ENCODE measurements at regions of chrX and their contacts with region 1.

Region 1: DNA sequence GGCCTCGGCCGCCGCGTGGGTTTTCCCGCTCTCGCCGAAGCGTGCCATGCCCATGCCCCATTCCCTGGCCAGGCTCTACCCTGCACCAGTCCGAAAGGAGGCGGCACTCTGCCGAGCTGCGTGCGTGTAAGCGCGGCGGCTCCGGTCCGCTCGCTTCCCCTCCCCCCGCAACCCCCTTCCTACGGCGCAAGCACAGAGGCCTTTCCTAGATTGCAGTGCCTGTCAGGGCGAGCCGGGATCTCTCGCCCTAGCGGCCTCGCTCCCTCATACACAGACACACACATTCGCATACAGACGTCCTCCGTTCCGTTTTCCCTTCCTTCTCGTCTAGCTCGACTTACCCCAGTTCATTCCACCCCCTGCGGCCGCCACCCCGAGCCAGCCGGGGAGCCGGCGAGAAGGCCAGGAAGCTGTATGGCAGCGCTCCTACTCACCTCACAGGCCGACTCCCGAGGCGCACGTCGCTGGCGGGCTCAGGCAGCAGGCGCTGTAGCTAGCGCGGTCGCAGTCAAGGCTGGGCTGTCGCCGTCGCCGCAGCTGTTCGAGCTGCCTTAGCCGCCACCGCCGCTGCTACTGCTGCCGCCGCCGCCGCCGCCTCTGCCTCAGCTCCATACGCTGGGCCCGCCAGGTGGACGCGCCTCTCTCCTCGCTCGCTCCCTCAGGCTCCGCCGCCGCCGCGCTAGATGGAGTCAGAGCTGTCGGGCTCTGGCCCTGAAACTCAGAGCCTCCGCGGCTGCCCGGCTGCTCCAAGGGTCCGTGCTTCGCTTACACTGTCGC is 615 bp downstream of the NEXMIF start:
- DNase-seq: no peak
- ATAC-seq: peak; percentile 74
- H3K4me3 ChIP-seq: peak overlapping the region; percentile 49
- H3K27ac ChIP-seq: peak overlapping the region; percentile 87
- H3K4me1 ChIP-seq: no peaks in the 10 kb centered on the region
- H3K27me3 ChIP-seq: no peaks in the 10 kb centered on the region
- CTCF ChIP-seq: no peak
- EP300 ChIP-seq: 0 out of 4 replicates have a peak, but pooled peaks of 1 of the 2 experiments have one; percentile 19
- POLR2A ChIP-seq: peak; percentile 78
- RAD21 ChIP-seq: no peak

Region 2: DNA sequence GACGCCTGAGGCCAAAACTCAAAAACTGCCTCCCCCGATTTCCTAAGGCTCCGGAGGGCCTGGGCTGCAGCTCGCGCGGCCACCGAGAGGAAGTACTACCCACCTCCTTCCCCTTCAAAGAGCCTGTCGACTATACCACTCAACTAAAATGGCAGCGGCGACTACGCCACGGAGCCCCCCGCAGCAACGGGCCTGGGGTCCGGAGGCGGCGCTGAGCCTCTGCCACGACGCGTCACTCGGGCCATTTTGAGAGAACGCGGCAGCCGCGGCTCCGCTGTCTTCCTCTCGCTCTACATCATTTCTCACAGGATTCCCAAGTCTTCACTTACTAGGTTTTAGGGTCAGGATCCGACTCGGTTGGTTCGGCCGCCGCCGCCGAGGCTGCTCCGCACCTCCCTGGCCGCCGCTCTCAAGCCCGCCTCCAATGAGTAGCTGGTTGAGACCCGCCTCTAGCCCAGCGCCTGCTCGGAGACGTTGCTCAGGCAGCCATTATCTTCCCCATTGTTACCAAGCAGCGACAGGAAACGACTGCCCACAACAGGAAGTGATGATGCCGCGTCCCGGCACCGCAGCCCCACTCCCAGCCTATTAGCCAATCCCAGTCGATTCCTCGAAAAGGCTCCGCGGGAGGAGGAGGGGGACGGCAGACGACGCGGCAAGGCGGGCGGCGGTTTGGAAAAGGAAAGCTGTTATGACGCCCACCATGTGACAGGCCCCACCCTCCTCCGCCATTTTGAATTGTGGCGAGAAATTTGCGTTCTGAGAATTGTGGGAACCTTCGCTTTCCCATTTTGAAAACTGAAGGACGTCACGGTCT is 310.3 kb before region 1 on chrX and contains the start of gene RLIM:
- CTCF ChIA-PET with region 1: no interaction called
- POLR2A ChIA-PET with region 1: no interaction called
- RAD21 ChIA-PET with region 1: interaction called, 3 read pairs
- SMC1A ChIA-PET with region 1: interaction called, 3 read pairs
- in situ Hi-C with region 1: loop called (anchors 5 kb)
- intact Hi-C with region 1: loop called (anchors 2 kb)
- DNase-seq: peak; percentile 85
- ATAC-seq: peak; percentile 94
- H3K4me3 ChIP-seq: peak within 1 kb of the TSS; percentile 72
- H3K27ac ChIP-seq: peak within 1 kb of the TSS; percentile 95
- H3K4me1 ChIP-seq: no peaks in the 10 kb centered on the region
- H3K27me3 ChIP-seq: no peaks in the 10 kb centered on the region
- CTCF ChIP-seq: no peak
- EP300 ChIP-seq: 0 out of 4 replicates have a peak, but pooled peaks of 1 of the 2 experiments have one; percentile 23
- POLR2A ChIP-seq: peak; percentile 91
- RAD21 ChIP-seq: no peak
- polyA plus RNA-seq, gene RLIM: 4.0 to 5.2 TPM

Region 3: DNA sequence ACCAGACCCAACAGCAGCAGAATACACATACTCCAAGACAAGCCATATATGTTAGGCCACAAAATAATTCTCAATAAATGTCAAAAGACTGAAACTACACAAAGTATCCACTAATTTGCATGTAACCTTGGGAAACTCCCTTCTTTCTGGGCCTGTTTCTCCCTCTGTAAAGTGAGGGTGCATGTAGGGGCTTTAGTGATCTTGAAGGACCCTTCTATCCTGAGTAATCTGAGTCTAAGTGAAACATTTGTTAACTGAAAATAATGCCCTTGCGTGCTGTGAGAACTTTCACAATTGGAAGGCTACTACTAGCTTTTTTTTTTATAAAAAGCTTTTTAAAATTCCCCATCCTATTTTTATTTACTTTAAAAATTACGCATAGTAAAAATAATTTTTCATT is 124.6 kb before region 1 on chrX:
- CTCF ChIA-PET with region 1: interaction called, 3 read pairs
- POLR2A ChIA-PET with region 1: interaction called, 3 read pairs
- RAD21 ChIA-PET with region 1: no interaction called
- SMC1A ChIA-PET with region 1: interaction called, 3 read pairs
- in situ Hi-C with region 1: loop called (anchors 5 kb)
- intact Hi-C with region 1: no loop called
- DNase-seq: no peak
- ATAC-seq: peak; percentile 83
- H3K4me3 ChIP-seq: no peak overlapping the region
- H3K27ac ChIP-seq: peak overlapping the region; percentile 18; the same call in 1 of the 2 replicates
- H3K4me1 ChIP-seq: no peaks in the 10 kb centered on the region
- H3K27me3 ChIP-seq: no peaks in the 10 kb centered on the region
- CTCF ChIP-seq: no peak
- EP300 ChIP-seq: no peak
- POLR2A ChIP-seq: no peak
- RAD21 ChIP-seq: peak; percentile 15; the same call in 1 of the 2 replicates

Region 4: GRCh38 chrX:74911494-74911893 is 13.1 kb before region 1 on chrX:
- CTCF ChIA-PET with region 1: interaction called, 3 read pairs
- POLR2A ChIA-PET with region 1: no interaction called
- RAD21 ChIA-PET with region 1: interaction called, 3 read pairs
- SMC1A ChIA-PET with region 1: interaction called, 5 read pairs
- in situ Hi-C with region 1: no loop called
- intact Hi-C with region 1: loop called (anchors 1 kb)
- DNase-seq: no peak
- ATAC-seq: peak; percentile 83
- H3K4me3 ChIP-seq: no peak overlapping the region
- H3K27ac ChIP-seq: peak overlapping the region; percentile 41; the same call in 1 of the 2 replicates
- H3K4me1 ChIP-seq: no peaks in the 10 kb centered on the region
- H3K27me3 ChIP-seq: no peaks in the 10 kb centered on the region
- CTCF ChIP-seq: no peak
- EP300 ChIP-seq: no peak
- POLR2A ChIP-seq: no peak
- RAD21 ChIP-seq: no peak

Region 5: DNA sequence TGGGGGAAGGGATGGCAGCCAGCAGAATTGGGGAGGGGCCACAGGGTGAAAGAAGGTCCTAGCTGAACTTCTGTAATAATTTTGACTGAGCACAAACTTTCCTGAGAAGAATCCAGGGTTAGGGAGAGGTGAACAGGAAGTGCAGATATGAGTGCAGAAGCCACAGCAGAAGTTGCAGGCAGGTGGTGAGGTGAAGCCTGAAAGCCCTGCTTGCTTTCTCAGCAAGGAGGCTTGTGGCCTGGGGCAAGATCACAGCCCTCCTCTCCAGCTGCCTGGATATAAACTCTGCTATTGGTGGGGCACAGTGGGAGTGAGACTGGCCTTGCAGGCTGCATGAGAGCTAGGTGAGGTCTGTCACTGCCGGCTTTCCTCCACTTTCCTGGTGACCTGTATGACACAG is 305.1 kb after region 1 on chrX:
- CTCF ChIA-PET with region 1: no interaction called
- POLR2A ChIA-PET with region 1: no interaction called
- RAD21 ChIA-PET with region 1: no interaction called
- SMC1A ChIA-PET with region 1: no interaction called
- in situ Hi-C with region 1: no loop called
- intact Hi-C with region 1: loop called (anchors 5 kb)
- DNase-seq: peak; percentile 2
- ATAC-seq: peak; percentile 83
- H3K4me3 ChIP-seq: no peak overlapping the region
- H3K27ac ChIP-seq: no peak overlapping the region
- H3K4me1 ChIP-seq: peaks cover 7% of the 10 kb centered on the region
- H3K27me3 ChIP-seq: no peaks in the 10 kb centered on the region
- CTCF ChIP-seq: no peak
- EP300 ChIP-seq: no peak
- POLR2A ChIP-seq: no peak
- RAD21 ChIP-seq: no peak

Region 6: DNA sequence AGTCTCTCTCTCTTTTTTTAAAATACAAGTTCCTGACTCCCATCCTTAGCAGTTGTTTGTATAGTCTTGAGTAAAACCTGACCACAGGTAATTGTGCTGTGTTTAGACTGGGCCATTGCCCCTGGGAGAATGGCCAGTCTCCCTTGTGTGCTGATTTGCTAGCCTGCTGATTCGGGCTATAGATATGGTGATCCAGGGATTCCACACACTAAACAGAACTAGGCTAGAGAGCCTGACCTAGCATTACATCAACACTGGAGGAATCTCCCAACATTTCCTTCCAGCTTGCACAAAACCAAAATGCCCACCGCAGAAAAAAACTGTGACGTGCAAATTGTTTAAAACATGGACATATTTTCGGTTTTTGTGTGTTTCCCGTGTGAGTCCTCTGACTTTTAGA is 354.4 kb after region 1 on chrX:
- CTCF ChIA-PET with region 1: interaction called, 3 read pairs
- POLR2A ChIA-PET with region 1: no interaction called
- RAD21 ChIA-PET with region 1: no interaction called
- SMC1A ChIA-PET with region 1: no interaction called
- in situ Hi-C with region 1: loop called (anchors 10 kb)
- intact Hi-C with region 1: loop called (anchors 5 kb)
- DNase-seq: no peak
- ATAC-seq: no peak
- H3K4me3 ChIP-seq: peak overlapping the region; percentile 10; the same call in 1 of the 2 replicates
- H3K27ac ChIP-seq: no peak overlapping the region
- H3K4me1 ChIP-seq: no peaks in the 10 kb centered on the region
- H3K27me3 ChIP-seq: no peaks in the 10 kb centered on the region
- CTCF ChIP-seq: no peak
- EP300 ChIP-seq: no peak
- POLR2A ChIP-seq: no peak
- RAD21 ChIP-seq: no peak